Mammary epithelial cell (primary cell): ENCODE measurements at regions of chr12 and their contacts with region 1.

Region 1: GRCh38 chr12:76898442-76898841 is 19.6 kb upstream of the CSRP2 start:
- DNase-seq: no peak
- H3K4me3 ChIP-seq: no peak overlapping the region
- H3K27ac ChIP-seq: no peak overlapping the region
- H3K4me1 ChIP-seq: no peaks in the 10 kb centered on the region
- H3K27me3 ChIP-seq: no peaks in the 10 kb centered on the region
- CTCF ChIP-seq: no peak

Region 2: DNA sequence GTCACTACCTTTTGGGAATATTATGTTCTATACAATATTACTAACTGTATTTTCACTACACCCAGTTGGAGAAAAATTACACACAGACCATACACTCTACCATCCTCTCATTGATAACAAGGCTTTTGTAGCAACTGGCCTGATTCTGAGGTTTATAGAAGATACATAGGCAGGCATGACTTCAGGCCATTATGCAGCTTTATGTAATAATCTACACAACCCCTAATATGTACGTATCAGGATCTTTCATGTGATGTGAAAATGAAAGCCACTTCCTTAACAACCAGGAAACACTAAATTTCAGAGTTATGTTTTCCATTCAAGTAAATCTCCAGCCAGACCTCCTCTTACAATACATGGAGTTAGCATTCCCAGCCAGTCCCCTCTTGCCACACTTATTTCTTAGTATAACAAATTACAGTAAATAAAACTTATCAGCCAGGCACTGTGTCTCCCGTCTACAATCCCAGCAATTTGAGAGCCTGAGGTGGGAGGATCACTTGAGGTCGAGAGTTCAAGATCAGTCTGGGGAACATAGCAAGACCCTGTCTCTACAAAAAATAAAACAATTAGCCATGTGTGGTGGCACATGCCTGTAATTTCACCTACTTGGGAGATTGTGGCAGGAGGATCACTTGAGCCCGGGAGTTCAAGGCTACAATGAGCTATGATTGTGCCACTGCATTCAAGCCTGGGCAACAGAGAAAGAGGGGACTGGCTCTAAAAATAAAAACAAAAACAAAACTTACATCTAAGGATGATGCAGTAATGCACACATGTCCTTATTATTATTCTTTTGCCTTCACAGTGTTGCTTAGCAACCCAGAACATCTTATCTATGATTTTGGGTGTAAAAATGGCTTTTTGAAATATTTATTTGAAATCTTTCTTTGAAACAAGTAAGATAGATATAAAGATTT is 328.5 kb before region 1 on chr12:
- CTCF ChIA-PET with region 1: no interaction called
- dilution Hi-C with region 1: no loop called
- in situ Hi-C with region 1: no loop called
- intact Hi-C with region 1: no loop called
- DNase-seq: no peak
- H3K4me3 ChIP-seq: no peak overlapping the region
- H3K27ac ChIP-seq: no peak overlapping the region
- H3K4me1 ChIP-seq: no peaks in the 10 kb centered on the region
- H3K27me3 ChIP-seq: no peaks in the 10 kb centered on the region
- CTCF ChIP-seq: no peak

Region 3: DNA sequence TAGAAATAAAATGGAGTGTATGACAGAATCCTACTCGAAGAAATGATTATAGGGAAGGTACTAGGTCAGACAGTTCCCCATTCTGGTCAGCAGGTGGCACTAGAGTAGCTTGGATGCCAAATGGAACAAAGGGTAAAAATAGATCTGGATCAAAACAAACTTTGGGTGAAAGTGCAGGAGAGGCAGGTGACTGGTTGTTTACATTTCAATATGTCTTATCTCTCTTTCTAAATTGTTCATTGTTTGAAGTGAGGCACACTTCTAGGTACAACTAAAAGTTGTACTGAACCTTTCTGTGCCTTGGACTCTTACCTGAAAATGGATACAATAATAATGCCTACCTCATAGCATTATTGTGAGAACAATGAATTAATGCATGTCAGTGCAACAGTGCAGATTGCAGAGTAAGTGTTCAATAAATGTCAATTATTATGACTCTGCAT is 276.8 kb before region 1 on chr12:
- CTCF ChIA-PET with region 1: no interaction called
- dilution Hi-C with region 1: no loop called
- in situ Hi-C with region 1: no loop called
- intact Hi-C with region 1: no loop called
- DNase-seq: peak; percentile 48
- H3K4me3 ChIP-seq: no peak overlapping the region
- H3K27ac ChIP-seq: no peak overlapping the region
- H3K4me1 ChIP-seq: no peaks in the 10 kb centered on the region
- H3K27me3 ChIP-seq: no peaks in the 10 kb centered on the region
- CTCF ChIP-seq: peak; percentile 90 to 96

Region 4: GRCh38 chr12:76848132-76848531 is 50.3 kb before region 1 on chr12:
- CTCF ChIA-PET with region 1: no interaction called
- dilution Hi-C with region 1: no loop called
- in situ Hi-C with region 1: no loop called
- intact Hi-C with region 1: loop called (anchors 2 kb)
- DNase-seq: peak; percentile 42
- H3K4me3 ChIP-seq: no peak overlapping the region
- H3K27ac ChIP-seq: no peak overlapping the region
- H3K4me1 ChIP-seq: peaks cover 6% of the 10 kb centered on the region
- H3K27me3 ChIP-seq: no peaks in the 10 kb centered on the region
- CTCF ChIP-seq: no peak